PC-9 (cell line): ENCODE measurements at regions of chr18 and their contacts with region 1.

Region 1: GRCh38 chr18:3604498-3605408 is 154.8 kb downstream of the TGIF1 start:
- DNase-seq: peak in 1 of 2 experiments; percentile 97
- H3K4me3 ChIP-seq: peak overlapping the region; percentile 72
- H3K27ac ChIP-seq: peak overlapping the region; percentile 100
- H3K4me1 ChIP-seq: peaks cover 32% of the 10 kb centered on the region
- H3K27me3 ChIP-seq: no peaks in the 10 kb centered on the region
- CTCF ChIP-seq: no peak

Region 2: DNA sequence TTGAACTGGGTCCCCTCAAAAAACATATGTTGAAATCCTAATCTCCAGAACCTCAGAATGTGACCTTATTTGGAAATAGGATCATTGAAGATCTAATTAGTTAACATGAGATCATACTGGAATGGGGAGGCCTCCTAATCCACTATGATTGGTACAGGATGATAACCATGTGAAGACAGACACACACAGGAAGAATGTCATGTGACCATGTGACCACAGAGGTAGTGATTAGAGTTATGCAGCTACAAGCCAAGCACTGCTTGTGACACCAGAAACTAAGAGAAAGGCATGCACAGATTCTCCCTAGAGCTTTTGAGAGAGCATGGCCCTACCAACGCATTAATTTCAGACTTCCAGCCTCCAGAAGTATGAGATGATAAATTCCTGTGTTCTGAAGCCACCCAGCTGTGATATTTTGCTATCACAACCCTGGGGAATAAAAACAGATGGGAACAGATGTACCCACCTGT is 201.7 kb before region 1 on chr18:
- CTCF ChIA-PET with region 1: no interaction called
- POLR2A ChIA-PET with region 1: no interaction called
- intact Hi-C with region 1: no loop called
- DNase-seq: no peak
- H3K4me3 ChIP-seq: no peak overlapping the region
- H3K27ac ChIP-seq: no peak overlapping the region
- H3K4me1 ChIP-seq: peaks cover 6% of the 10 kb centered on the region; the same call in 1 of the 2 replicates
- H3K27me3 ChIP-seq: no peaks in the 10 kb centered on the region
- CTCF ChIP-seq: no peak

Region 3: DNA sequence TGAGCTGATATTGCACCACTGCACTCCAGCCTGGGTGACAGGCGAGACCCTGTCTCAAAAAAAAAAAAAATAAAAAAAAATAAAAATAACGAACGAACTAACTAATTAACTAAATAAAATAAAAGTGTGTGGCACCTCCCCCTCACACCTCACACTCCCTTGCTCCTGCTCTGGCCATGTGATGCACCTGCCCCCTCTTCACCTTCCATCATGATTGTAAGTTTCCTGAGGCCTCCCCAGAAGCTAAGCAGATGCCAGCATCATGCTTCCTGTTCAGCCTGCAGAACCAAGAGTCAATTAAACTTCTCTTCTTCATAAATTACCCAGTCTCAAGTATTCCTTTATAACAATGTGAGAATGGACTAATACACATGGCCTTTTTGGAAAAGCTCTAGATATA is 77.3 kb after region 1 on chr18:
- CTCF ChIA-PET with region 1: interaction called, 13 read pairs
- POLR2A ChIA-PET with region 1: no interaction called
- intact Hi-C with region 1: no loop called
- DNase-seq: no peak
- H3K4me3 ChIP-seq: no peak overlapping the region
- H3K27ac ChIP-seq: no peak overlapping the region
- H3K4me1 ChIP-seq: peaks cover 8% of the 10 kb centered on the region
- H3K27me3 ChIP-seq: no peaks in the 10 kb centered on the region
- CTCF ChIP-seq: no peak

Region 4: GRCh38 chr18:3845161-3845560 is 240.4 kb after region 1 on chr18:
- CTCF ChIA-PET with region 1: no interaction called
- POLR2A ChIA-PET with region 1: no interaction called
- intact Hi-C with region 1: no loop called
- DNase-seq: no peak
- H3K4me3 ChIP-seq: no peak overlapping the region
- H3K27ac ChIP-seq: no peak overlapping the region
- H3K4me1 ChIP-seq: peaks cover 4% of the 10 kb centered on the region; the same call in 1 of the 2 replicates
- H3K27me3 ChIP-seq: no peaks in the 10 kb centered on the region
- CTCF ChIP-seq: no peak